ENCODE measurements at regions of chr9 and their contacts with region 1.

Region 1: GRCh38 chr9:124309665-124310064 is 51.9 kb downstream of the NEK6 start:
- DNase-seq: no peak
- H3K4me3 ChIP-seq: no peak overlapping the region
- H3K27ac ChIP-seq: no peak overlapping the region
- H3K4me1 ChIP-seq: no peaks in the 10 kb centered on the region
- H3K27me3 ChIP-seq: no peaks in the 10 kb centered on the region
- CTCF ChIP-seq: no peak
- POLR2A ChIP-seq: no peak

Region 2: GRCh38 chr9:124126571-124127289 is 182.9 kb before region 1 on chr9:
- intact Hi-C with region 1: loop called (anchors 10 kb)
- DNase-seq: peak; percentile 55 to 75
- H3K4me3 ChIP-seq: no peak overlapping the region
- H3K27ac ChIP-seq: no peak overlapping the region
- H3K4me1 ChIP-seq: no peaks in the 10 kb centered on the region
- H3K27me3 ChIP-seq: no peaks in the 10 kb centered on the region
- CTCF ChIP-seq: peak; percentile 83 to 97 (median 93)
- POLR2A ChIP-seq: no peak

Measured in breast epithelium (tissue), 4 donors.